Astrocyte of the cerebellum (primary cell): ENCODE measurements at regions of chr4 and their contacts with region 1.

Region 1: DNA sequence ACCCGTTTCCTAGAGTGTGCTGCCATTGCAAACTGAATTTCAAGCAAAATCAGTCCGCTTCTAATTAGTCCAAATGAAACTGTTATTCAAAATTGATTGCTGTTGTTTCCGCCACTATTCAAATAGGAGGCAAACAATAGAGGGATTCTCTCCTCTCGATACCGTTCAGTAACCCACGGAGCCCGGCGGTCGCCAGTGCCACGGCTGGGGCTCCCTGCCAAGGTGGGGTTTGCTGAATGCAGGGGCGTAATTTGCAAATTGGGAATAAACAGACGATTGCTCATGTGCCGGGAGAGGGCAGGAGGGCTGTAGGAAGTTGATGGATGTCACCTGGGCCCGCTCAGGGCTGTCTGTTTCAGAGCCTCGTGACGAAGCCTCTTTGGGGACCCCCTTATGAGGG is 8.8 kb downstream of the ADRA2C start:
- DNase-seq: no peak
- H3K4me3 ChIP-seq: no peak overlapping the region
- CTCF ChIP-seq: no peak

Region 2: GRCh38 chr4:3851211-3851610 is 76.2 kb after region 1 on chr4:
- in situ Hi-C with region 1: loop called (anchors 5 kb)
- DNase-seq: no peak
- H3K4me3 ChIP-seq: no peak overlapping the region
- CTCF ChIP-seq: no peak

Region 3: GRCh38 chr4:5054532-5054931 is 1279.5 kb after region 1 on chr4:
- in situ Hi-C with region 1: no loop called
- DNase-seq: no peak
- H3K4me3 ChIP-seq: no peak overlapping the region
- CTCF ChIP-seq: no peak